SK-N-SH (cell line): ENCODE measurements at regions of chr12 and their contacts with region 1.

Region 1: DNA sequence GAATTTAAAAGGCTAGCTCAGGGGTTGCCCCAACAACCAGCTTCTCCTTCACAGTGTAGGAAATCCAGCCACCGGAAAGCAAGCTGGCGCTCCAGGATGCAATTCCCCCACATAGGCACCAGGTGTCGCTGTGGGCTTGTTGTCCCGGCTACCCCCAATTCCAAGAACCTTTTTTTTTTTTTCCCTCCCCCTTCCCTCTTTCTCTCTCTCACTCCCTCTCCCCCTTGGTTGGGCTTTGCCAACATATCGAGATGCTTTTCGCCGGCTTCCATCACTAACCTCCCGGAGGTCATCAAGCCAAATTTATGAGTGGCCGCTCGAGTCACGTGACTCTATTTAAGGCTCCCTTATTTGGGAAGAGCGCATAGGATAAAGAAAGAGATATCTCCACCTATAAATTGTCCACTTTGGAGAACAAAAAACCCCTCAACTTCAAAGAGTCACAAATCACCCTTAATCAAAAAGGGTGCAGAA is at the start of gene HOXC5:
- DNase-seq: peak; percentile 93
- H3K4me3 ChIP-seq: peak within 1 kb of the TSS; percentile 52 to 60
- H3K27ac ChIP-seq: peak within 1 kb of the TSS in 1 of 2 experiments; percentile 93; a peak in 3 of 4 replicates
- H3K4me1 ChIP-seq: peaks cover 0 to 41% of the 10 kb centered on the region in 2 experiments; a peak in 1 of 4 replicates
- H3K27me3 ChIP-seq: no peaks in the 10 kb centered on the region
- CTCF ChIP-seq: peak; percentile 94
- EP300 ChIP-seq: 0 out of 4 replicates have a peak, but pooled peaks of 1 of the 2 experiments have one; percentile 32
- RAD21 ChIP-seq: peak; percentile 99
- polyA plus RNA-seq, gene HOXC5: 1.5 and 2.1 TPM in 2 replicates

Region 2: DNA sequence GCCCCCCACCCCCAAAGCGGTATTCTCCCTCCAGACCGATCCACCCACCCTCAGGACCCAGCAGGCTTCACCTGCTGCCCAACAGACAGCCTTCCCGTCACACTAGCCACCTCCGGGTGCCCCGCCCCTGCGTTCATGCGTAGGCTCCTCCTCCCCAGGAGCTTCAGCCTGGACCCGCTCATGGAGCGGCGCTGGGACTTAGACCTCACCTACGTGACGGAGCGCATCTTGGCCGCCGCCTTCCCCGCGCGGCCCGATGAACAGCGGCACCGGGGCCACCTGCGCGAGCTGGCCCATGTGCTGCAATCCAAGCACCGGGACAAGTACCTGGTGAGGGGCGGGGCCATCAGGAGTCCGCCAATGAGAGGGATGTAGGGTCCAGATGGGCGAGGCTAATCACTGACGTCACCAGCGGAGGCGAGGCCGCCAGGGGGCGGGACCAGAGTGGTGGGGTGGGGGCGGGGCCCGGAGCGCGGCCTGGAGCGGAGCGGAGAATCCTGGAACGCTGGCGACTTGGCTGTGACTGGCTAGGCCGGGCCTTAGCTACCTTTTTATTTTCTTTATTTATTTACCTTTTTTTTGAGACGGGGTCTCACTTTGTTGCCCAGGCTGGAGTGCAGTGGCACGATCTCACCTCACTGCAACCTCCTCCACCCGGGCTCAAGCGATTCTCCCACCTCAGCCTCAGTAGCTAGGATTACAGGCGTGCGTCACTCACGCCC is 978.4 kb before region 1 on chr12:
- CTCF ChIA-PET with region 1: no interaction called
- POLR2A ChIA-PET with region 1: no interaction called
- DNase-seq: peak; percentile 97
- H3K4me3 ChIP-seq: peak overlapping the region; percentile 66
- H3K27ac ChIP-seq: peak overlapping the region; percentile 35 to 78; a peak in 3 of 4 replicates
- H3K4me1 ChIP-seq: peaks cover 25 to 46% of the 10 kb centered on the region in 2 experiments
- H3K27me3 ChIP-seq: no peaks in the 10 kb centered on the region
- CTCF ChIP-seq: no peak
- EP300 ChIP-seq: no peak
- RAD21 ChIP-seq: no peak

Region 3: GRCh38 chr12:53907103-53907502 is 125.6 kb before region 1 on chr12:
- CTCF ChIA-PET with region 1: no interaction called
- POLR2A ChIA-PET with region 1: no interaction called
- DNase-seq: no peak
- H3K4me3 ChIP-seq: no peak overlapping the region
- H3K27ac ChIP-seq: no peak overlapping the region
- H3K4me1 ChIP-seq: no peaks in the 10 kb centered on the region
- H3K27me3 ChIP-seq: peaks cover 18% of the 10 kb centered on the region
- CTCF ChIP-seq: no peak
- EP300 ChIP-seq: no peak
- RAD21 ChIP-seq: no peak

Region 4: DNA sequence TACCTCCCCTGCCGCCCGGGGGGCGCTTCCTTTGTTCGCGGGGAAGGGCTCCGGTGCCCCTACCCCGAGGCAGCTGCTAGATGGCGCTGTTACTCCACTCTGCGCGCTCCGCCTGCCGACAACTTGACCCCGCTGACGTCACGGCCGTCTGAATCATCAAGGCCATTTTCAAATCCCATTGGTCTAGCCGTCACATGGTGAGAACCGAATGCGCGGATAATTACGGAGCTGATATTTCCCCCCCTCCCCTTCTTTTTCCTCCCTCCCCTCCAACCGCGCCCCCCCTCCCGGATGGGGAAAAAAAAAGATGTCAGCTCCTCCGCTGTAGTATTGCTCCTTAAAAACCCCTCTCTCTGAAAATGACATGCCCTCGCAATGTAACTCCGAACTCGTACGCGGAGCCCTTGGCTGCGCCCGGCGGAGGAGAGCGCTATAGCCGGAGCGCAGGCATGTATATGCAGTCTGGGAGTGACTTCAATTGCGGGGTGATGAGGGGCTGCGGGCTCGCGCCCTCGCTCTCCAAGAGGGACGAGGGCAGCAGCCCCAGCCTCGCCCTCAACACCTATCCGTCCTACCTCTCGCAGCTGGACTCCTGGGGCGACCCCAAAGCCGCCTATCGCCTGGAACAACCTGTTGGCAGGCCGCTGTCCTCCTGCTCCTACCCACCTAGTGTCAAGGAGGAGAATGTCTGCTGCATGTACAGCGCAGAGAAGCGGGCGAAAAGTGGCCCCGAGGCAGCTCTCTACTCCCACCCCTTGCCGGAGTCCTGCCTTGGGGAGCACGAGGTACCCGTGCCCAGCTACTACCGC is 47.6 kb before region 1 on chr12 and contains the start of gene HOXC10:
- CTCF ChIA-PET with region 1: interaction called, 27 read pairs
- POLR2A ChIA-PET with region 1: no interaction called
- DNase-seq: peak; percentile 97
- H3K4me3 ChIP-seq: peak within 1 kb of the TSS; percentile 41 to 52; a peak in 3 of 4 replicates
- H3K27ac ChIP-seq: no peak within 1 kb of the TSS
- H3K4me1 ChIP-seq: peaks cover 0 to 12% of the 10 kb centered on the region in 2 experiments; a peak in 1 of 4 replicates
- H3K27me3 ChIP-seq: peaks cover 95% of the 10 kb centered on the region
- CTCF ChIP-seq: peak; percentile 80
- EP300 ChIP-seq: no peak
- RAD21 ChIP-seq: peak; percentile 88
- polyA plus RNA-seq, gene HOXC10: 0.03 and 0.08 TPM in 2 replicates

Region 5: GRCh38 chr12:54005853-54006686 is 26.6 kb before region 1 on chr12:
- CTCF ChIA-PET with region 1: interaction called, 107 read pairs
- POLR2A ChIA-PET with region 1: interaction called, 3 read pairs
- DNase-seq: peak; percentile 93
- H3K4me3 ChIP-seq: no peak overlapping the region
- H3K27ac ChIP-seq: no peak overlapping the region
- H3K4me1 ChIP-seq: peaks cover 0 to 23% of the 10 kb centered on the region in 2 experiments; a peak in 1 of 4 replicates
- H3K27me3 ChIP-seq: no peaks in the 10 kb centered on the region
- CTCF ChIP-seq: peak; percentile 89
- EP300 ChIP-seq: no peak
- RAD21 ChIP-seq: peak; percentile 94

Region 6: DNA sequence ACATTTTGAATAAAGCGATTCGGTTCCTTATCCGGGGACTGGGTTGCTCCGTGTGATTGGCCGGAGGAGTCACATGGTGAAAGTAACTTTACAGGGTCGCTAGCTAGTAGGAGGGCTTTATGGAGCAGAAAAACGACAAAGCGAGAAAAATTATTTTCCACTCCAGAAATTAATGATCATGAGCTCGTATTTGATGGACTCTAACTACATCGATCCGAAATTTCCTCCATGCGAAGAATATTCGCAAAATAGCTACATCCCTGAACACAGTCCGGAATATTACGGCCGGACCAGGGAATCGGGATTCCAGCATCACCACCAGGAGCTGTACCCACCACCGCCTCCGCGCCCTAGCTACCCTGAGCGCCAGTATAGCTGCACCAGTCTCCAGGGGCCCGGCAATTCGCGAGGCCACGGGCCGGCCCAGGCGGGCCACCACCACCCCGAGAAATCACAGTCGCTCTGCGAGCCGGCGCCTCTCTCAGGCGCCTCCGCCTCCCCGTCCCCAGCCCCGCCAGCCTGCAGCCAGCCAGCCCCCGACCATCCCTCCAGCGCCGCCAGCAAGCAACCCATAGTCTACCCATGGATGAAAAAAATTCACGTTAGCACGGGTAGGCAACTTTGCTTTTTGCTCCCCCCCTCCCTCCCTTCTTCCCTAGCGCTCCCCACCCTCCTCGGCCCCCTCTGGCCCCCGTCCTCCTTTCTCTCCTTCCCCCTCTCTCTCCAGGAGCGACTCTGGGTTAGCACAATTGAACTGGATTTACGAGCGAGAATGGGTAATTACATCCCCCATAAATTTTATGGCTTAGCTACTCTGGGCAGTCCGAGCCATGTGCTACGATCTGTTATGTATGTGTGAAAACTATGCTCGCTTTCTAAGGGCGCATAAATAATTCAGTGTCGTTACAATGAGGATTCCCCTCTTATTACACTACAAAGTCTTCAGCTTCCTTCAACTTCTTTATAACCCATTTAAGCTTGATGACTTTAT is 21.4 kb after region 1 on chr12 and contains the start of gene HOXC4:
- CTCF ChIA-PET with region 1: interaction called, 45 read pairs
- POLR2A ChIA-PET with region 1: interaction called, 25 read pairs
- DNase-seq: peak; percentile 86
- H3K4me3 ChIP-seq: peak within 1 kb of the TSS; percentile 82 to 85
- H3K27ac ChIP-seq: peak within 1 kb of the TSS; percentile 57 to 96
- H3K4me1 ChIP-seq: peaks cover 15 to 37% of the 10 kb centered on the region in 2 experiments; a peak in 3 of 4 replicates
- H3K27me3 ChIP-seq: no peaks in the 10 kb centered on the region
- CTCF ChIP-seq: 0 out of 2 replicates have a peak, but pooled peaks have one; percentile 14
- EP300 ChIP-seq: no peak
- RAD21 ChIP-seq: no peak
- polyA plus RNA-seq, gene HOXC4: 1.6 and 3.7 TPM in 2 replicates

Region 7: DNA sequence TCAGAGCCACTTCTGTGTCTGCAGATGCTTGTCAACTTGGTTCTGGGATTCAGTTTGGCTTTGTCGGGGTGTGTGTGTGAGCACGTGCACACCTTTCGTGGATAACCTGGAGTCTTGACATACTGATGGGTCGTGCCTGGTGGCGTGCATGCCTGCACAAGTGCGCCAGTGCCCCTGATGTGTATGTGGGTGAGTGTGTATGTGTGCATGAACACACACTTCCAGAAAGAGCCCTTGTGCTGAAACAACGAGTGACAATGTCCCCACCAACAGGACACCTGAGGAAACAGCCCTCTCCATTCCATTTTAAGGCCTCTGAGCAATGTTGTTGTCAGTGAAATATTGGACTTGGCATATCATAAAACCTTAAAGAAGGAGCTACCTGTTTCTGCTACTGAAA is 102.2 kb after region 1 on chr12:
- CTCF ChIA-PET with region 1: interaction called, 54 read pairs
- POLR2A ChIA-PET with region 1: interaction called, 4 read pairs
- DNase-seq: peak; percentile 45
- H3K4me3 ChIP-seq: no peak overlapping the region
- H3K27ac ChIP-seq: peak overlapping the region in 1 of 2 experiments; percentile 67; a peak in 2 of 4 replicates
- H3K4me1 ChIP-seq: peaks cover 0 to 47% of the 10 kb centered on the region in 2 experiments; a peak in 2 of 4 replicates
- H3K27me3 ChIP-seq: no peaks in the 10 kb centered on the region
- CTCF ChIP-seq: no peak
- EP300 ChIP-seq: no peak
- RAD21 ChIP-seq: peak; percentile 76

Region 8: GRCh38 chr12:54191550-54192022 is 158.9 kb after region 1 on chr12:
- CTCF ChIA-PET with region 1: interaction called, 548 read pairs
- POLR2A ChIA-PET with region 1: interaction called, 8 read pairs
- DNase-seq: peak; percentile 83
- H3K4me3 ChIP-seq: peak overlapping the region in 1 of 2 experiments; percentile 46; a peak in 1 of 4 replicates
- H3K27ac ChIP-seq: no peak overlapping the region
- H3K4me1 ChIP-seq: peaks cover 17 to 50% of the 10 kb centered on the region in 2 experiments; a peak in 3 of 4 replicates
- H3K27me3 ChIP-seq: no peaks in the 10 kb centered on the region
- CTCF ChIP-seq: peak; percentile 82
- EP300 ChIP-seq: no peak
- RAD21 ChIP-seq: peak; percentile 94